ENCODE measurements at regions of chr5 and their contacts with region 1.

Region 1: DNA sequence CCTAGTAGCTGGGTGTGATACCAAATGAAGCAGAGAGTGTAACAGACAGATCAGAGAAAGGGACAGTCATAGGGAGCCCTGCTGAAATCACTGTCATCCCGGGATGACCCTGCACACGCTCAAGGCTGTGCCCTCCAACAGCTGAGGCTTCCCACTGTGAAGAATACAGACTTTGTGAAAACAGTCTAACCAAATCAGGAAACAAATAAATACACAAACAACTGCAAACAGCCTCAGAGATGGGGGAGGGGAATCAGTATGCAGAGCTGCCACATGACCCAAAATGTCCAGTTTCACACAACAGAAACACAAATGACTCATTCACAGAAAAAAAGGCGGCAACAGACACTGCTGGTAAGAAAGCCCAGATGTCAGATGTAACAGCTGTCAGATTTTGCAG is 101.9 kb downstream of the ADAMTS2 start:
- DNase-seq: no peak
- ATAC-seq: peak; percentile 80

Region 2: DNA sequence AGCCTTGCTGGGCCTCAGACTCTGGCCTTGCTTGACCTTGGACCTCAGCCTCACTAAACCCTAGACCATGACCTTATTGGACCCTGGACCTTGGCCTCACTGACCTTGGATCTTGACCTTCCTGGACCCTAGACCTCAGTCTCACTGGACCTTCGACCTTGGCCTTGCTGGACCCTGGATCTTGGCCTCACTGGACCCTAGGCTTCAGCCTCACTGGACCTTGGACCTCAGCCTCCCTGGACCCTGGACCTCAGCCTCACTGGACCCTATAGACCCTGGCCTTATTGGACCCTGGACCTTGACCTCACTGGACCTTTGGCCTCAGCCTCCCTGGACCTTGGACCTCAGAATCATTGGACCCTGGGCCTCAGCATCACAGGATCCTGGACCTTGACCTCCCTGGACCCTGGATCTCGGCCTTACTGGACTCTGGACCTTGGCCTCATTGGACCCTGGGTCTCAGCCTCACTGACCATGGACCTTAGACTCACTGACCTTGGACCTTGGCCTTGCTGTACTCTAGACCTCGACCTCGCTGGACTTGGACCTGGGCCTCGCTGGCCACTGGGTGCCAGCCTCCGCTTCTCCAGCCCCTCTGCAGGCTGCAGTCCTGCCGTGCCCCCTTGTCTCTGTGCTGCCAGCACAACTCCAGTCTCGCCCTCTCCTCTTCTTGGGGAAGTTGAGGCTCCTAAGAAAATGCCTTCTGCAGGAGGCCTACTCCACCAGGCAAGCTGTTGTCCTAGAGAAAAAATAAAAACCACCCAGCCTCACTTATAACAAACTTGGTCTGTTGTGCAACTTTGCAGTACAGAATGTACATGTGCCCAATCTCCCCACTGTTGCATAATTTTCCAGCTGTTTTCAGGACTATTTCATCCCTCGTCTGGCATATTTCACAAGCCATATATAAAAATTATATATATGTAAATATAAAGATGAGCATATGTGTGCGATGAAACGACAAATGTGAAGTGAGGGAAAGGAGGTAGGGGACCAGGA is 112.9 kb after region 1 on chr5:
- intact Hi-C with region 1: loop called (anchors 10 kb)
- DNase-seq: no peak
- ATAC-seq: peak; percentile 88

Region 3: GRCh38 chr5:179923436-179923835 is 680.1 kb after region 1 on chr5:
- intact Hi-C with region 1: no loop called
- DNase-seq: no peak
- ATAC-seq: no peak

Measured in left ventricle myocardium superior (tissue), 1 donor.